ENCODE measurements at regions of chr10 and their contacts with region 1.

Region 1: DNA sequence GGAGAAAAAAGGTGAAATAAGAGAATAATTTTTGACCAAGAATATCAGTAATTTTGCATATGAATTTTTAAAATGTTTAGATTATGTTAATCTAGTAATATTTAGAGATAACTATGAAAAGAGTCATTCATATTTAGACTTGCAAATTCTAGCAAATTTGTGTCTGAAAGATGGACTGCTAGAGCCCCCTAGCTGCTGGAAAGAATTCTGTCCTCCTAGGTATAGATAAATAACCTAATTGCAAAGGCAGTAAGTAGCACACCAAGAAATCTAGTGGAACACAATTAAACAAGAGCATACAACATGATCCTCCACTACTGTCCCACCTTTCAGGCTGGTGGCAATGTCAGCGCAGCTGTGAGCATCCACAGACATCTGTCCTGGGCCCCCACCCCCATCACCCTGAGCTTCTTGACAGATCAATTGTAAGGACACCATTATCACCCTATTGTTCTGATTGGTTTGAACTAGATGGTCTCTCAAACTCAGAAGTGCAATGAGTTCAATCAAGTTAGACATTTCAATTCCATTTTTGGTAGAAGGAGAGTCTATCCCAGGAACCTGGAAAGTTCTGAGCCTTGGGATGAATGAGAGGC is 15.0 kb upstream of the GFRA1 start:
- DNase-seq: no peak
- H3K4me3 ChIP-seq: no peak overlapping the region
- H3K27ac ChIP-seq: no peak overlapping the region
- H3K4me1 ChIP-seq: no peaks in the 10 kb centered on the region
- H3K27me3 ChIP-seq: peaks cover 0 to 13% (median 0%) of the 10 kb centered on the region in 7 donors
- CTCF ChIP-seq: peak in 7 of 11 experiments; percentile 30 to 55 (median 43)
- POLR2A ChIP-seq: no peak

Region 2: DNA sequence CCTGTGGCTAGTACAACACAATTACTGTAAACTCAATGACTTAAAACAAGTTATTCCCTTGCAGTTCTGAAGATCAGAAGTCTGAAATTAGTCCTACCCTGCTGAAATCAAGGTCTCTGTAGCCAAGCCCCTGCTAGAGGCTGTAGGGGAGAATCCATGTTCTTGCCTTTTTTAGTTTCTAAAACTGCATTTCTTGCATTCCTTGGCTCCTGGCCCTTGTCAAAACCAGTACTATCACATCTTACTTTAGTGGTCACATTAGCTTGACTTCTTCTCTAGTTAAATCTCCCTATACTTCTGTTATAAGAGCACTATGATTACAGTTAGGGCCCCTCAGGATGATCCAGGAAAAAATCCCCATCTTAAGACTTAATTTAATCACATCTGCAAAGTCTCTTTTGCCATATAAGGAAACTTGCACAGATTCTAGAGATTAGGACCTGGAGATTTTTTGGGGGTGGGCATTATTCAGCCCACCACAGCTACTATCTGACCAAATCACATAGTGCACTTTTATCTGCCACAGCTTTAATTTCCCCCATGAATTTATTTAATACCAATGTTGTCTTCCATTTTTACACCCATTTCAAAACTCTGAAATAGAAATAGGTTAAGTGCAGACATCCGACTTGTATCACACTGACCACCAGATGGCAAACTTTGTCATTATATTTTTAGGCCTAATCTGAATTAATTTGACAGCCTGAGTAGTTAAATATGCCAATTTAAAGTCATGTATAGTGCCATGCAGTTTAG is 581.8 kb before region 1 on chr10:
- intact Hi-C with region 1: loop called (anchors 10 kb)
- DNase-seq: no peak
- H3K4me3 ChIP-seq: no peak overlapping the region
- H3K27ac ChIP-seq: no peak overlapping the region
- H3K4me1 ChIP-seq: no peaks in the 10 kb centered on the region
- H3K27me3 ChIP-seq: no peaks in the 10 kb centered on the region
- CTCF ChIP-seq: peak in 4 of 11 experiments; percentile 17 to 31 (median 28)
- POLR2A ChIP-seq: no peak

Region 3: GRCh38 chr10:115790220-115790619 is 497.8 kb before region 1 on chr10:
- intact Hi-C with region 1: loop called (anchors 10 kb)
- DNase-seq: no peak
- H3K4me3 ChIP-seq: no peak overlapping the region
- H3K27ac ChIP-seq: no peak overlapping the region
- H3K4me1 ChIP-seq: no peaks in the 10 kb centered on the region
- H3K27me3 ChIP-seq: no peaks in the 10 kb centered on the region
- CTCF ChIP-seq: no peak
- POLR2A ChIP-seq: no peak

Region 4: GRCh38 chr10:116336866-116337265 is 48.9 kb after region 1 on chr10:
- intact Hi-C with region 1: no loop called
- DNase-seq: no peak
- H3K4me3 ChIP-seq: no peak overlapping the region
- H3K27ac ChIP-seq: no peak overlapping the region
- H3K4me1 ChIP-seq: no peaks in the 10 kb centered on the region
- H3K27me3 ChIP-seq: no peaks in the 10 kb centered on the region
- CTCF ChIP-seq: no peak
- POLR2A ChIP-seq: no peak